Common myeloid progenitor, CD34-positive (primary cell): ENCODE measurements at regions of chr1 and their contacts with region 1.

Region 1: DNA sequence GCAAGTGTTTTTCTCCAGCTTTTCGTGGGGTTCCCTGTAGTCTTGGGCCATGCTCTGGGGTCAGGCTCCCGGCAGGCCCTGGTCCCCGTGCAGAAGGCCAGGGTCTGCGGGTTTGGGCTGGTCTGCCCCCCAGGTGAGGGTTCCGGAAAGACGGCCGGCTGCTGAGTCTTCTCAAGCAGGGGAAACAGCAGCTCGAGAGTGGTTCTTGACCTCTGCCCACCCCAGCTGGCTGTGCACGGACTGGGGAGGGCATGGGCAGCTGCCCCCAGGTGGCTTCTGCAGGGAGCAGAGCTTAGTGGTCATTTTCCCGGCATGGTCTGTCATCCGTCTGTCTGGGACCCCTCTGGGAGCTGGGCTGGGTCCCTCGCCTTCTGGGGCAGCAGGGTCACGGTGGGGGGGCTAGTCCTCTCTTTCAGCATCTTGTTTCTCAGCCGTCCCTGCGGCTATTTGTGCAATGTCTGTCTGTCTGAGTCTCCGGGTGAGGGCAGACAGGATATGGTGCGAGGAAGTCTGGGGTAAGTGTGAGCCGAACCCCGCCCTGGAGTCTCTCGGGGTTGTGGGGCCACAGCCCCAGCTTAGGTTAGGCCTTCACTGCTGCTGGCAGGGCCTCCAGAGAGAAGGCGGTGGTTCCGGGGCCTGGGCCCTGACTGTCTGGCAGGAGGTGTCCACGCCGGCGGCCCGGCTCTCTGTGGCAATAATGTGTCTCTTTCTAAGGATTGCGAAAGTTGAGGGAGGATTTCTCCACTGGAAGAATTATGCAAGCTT is 6.1 kb downstream of the SKI start:
- DNase-seq: peak; percentile 57 to 86 (median 81)
- H3K4me3 ChIP-seq: peak overlapping the region in 5 of 7 experiments; percentile 8 to 60 (median 36)
- H3K27ac ChIP-seq: peak overlapping the region; percentile 40 to 71
- H3K4me1 ChIP-seq: peaks cover 6 to 95% (median 83%) of the 10 kb centered on the region in 4 experiments
- H3K27me3 ChIP-seq: no peaks in the 10 kb centered on the region

Region 2: GRCh38 chr1:2205191-2205952 is 28.8 kb before region 1 on chr1:
- CTCF ChIA-PET with region 1: interaction called, 21 read pairs
- POLR2A ChIA-PET with region 1: interaction called, 26 read pairs
- DNase-seq: peak; percentile 89 to 93 (median 93)
- H3K4me3 ChIP-seq: peak overlapping the region; percentile 27 to 71 (median 48)
- H3K27ac ChIP-seq: no peak overlapping the region
- H3K4me1 ChIP-seq: peaks cover 0 to 24% (median 20%) of the 10 kb centered on the region in 4 experiments
- H3K27me3 ChIP-seq: no peaks in the 10 kb centered on the region